ENCODE measurements at regions of chr18 and their contacts with region 1.

Region 1: DNA sequence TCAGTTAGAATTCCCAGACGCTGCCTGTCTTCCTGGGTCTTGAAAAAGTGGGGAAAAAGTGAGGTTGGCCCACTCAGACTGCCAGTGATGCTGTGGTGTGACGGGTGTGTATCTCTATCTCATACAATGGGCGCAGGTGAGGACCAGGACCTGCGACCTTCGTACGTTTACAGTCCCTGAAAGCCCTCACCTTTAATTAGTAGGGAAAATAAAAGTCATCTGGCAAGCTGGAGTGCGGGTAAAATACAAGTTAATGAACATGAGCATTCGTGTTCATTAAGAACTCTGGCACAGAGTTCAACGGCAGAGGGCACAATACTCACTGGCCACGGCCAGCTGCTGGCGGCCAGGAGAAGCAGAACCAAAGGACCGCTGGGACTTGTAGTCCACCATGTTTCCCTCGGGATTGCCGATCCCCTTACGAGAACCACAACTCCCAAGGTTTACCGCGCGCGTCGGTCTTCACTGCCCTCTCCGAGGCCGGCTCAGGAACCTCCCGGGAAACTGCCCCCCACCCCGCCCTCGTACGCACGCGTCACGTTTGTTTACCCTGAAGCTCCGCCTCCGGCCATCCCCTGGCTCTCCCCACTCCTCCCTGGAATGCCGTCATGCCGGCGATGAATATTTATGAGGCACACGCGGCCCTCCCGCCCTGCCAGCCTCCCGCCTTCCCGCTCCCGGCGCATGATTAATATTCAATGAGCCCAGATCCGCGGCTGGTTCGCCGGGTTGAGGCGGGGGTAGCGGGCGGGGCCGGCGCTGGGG is 488 bp upstream of the PHLPP1 start:
- DNase-seq: peak; percentile 91
- ATAC-seq: peak; percentile 75
- H3K4me3 Mint-ChIP-seq: peak overlapping the region; percentile 88
- H3K27ac Mint-ChIP-seq: peak overlapping the region; percentile 78
- H3K4me1 Mint-ChIP-seq: peaks cover 21% of the 10 kb centered on the region
- H3K27me3 Mint-ChIP-seq: peaks cover 12% of the 10 kb centered on the region

Region 2: GRCh38 chr18:62867534-62867933 is 152.7 kb after region 1 on chr18:
- CTCF ChIA-PET with region 1: interaction called, 6 read pairs
- POLR2A ChIA-PET with region 1: interaction called, 13 read pairs
- DNase-seq: no peak
- ATAC-seq: no peak
- H3K4me3 Mint-ChIP-seq: no peak overlapping the region
- H3K27ac Mint-ChIP-seq: no peak overlapping the region
- H3K4me1 Mint-ChIP-seq: peaks cover 25% of the 10 kb centered on the region
- H3K27me3 Mint-ChIP-seq: no peaks in the 10 kb centered on the region

Region 3: GRCh38 chr18:62957885-62958472 is 243.1 kb after region 1 on chr18:
- CTCF ChIA-PET with region 1: interaction called, 79 read pairs
- POLR2A ChIA-PET with region 1: interaction called, 6 read pairs
- DNase-seq: peak; percentile 61
- ATAC-seq: peak; percentile 63
- H3K4me3 Mint-ChIP-seq: no peak overlapping the region
- H3K27ac Mint-ChIP-seq: no peak overlapping the region
- H3K4me1 Mint-ChIP-seq: peaks cover 15% of the 10 kb centered on the region
- H3K27me3 Mint-ChIP-seq: no peaks in the 10 kb centered on the region